A673 (cell line): ENCODE measurements at regions of chr5 and their contacts with region 1.

Region 1: GRCh38 chr5:149561848-149562247 is 10.6 kb upstream of the CSNK1A1 start:
- DNase-seq: peak; percentile 94
- H3K4me3 ChIP-seq: peak overlapping the region; percentile 21
- H3K27ac ChIP-seq: peak overlapping the region; percentile 73
- H3K4me1 ChIP-seq: peaks cover 31% of the 10 kb centered on the region
- H3K27me3 ChIP-seq: no peaks in the 10 kb centered on the region
- CTCF ChIP-seq: no peak

Region 2: DNA sequence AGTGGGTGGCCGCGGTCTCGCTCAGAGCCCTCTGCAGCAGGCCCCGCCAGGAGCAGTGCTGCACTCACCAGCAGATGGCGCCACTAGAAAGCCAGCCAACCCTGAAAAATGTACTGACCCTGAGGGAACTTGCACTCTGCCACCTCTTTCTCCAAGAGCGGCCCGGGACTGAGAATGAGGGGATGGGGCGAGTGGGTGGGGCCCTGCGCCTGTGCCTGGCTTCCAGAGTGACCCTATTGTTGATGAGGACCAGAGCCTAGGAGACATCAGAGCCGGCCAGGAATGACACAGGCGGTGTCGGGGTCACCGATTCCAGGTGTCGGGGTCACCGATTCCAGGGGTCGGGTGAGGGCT is 179.9 kb before region 1 on chr5:
- CTCF ChIA-PET with region 1: interaction called, 4 read pairs
- POLR2A ChIA-PET with region 1: no interaction called
- intact Hi-C with region 1: loop called (anchors 1 kb)
- DNase-seq: peak; percentile 62
- H3K4me3 ChIP-seq: no peak overlapping the region
- H3K27ac ChIP-seq: no peak overlapping the region
- H3K4me1 ChIP-seq: no peaks in the 10 kb centered on the region
- H3K27me3 ChIP-seq: no peaks in the 10 kb centered on the region
- CTCF ChIP-seq: peak; percentile 95

Region 3: DNA sequence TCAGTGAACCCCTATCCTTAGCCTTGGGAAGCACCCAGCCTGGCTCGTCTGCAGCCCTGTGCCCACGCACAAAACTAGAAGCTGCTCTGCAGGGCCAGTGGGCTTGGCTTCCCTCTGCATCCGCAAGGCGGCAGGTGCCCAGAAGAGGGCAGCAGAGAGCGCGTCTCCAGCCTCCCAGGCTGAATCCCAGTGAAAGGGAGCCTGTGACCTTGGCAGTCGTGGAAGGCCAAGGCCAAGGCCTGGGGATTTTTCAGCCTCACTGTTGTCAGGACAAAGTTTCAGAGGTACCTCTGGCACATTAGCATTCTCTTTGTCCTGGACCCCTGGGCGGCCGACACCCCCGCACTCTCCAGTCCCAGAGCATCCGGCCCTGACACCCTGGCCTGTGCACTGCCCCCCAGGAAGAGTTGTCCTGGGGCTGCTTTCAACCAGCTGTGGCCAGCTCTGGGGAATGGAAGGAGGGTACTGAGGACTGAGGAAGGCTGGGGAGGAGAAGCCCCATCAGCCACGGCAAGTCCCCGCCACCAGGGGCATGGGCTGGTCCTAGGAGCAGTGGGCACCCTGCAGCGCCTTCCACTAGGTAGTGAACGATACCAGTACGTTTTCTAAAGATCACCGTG is 119.2 kb before region 1 on chr5:
- CTCF ChIA-PET with region 1: no interaction called
- POLR2A ChIA-PET with region 1: no interaction called
- intact Hi-C with region 1: loop called (anchors 2 kb)
- DNase-seq: peak; percentile 76
- H3K4me3 ChIP-seq: no peak overlapping the region
- H3K27ac ChIP-seq: no peak overlapping the region
- H3K4me1 ChIP-seq: no peaks in the 10 kb centered on the region
- H3K27me3 ChIP-seq: no peaks in the 10 kb centered on the region
- CTCF ChIP-seq: peak; percentile 93

Region 4: GRCh38 chr5:149551200-149552037 is 10.4 kb before region 1 on chr5 and contains the start of gene CSNK1A1:
- CTCF ChIA-PET with region 1: interaction called, 11 read pairs
- POLR2A ChIA-PET with region 1: interaction called, 3 read pairs
- intact Hi-C with region 1: no loop called
- DNase-seq: peak; percentile 99
- H3K4me3 ChIP-seq: peak within 1 kb of the TSS; percentile 91
- H3K27ac ChIP-seq: peak within 1 kb of the TSS; percentile 95
- H3K4me1 ChIP-seq: peaks cover 30% of the 10 kb centered on the region
- H3K27me3 ChIP-seq: no peaks in the 10 kb centered on the region
- CTCF ChIP-seq: peak; percentile 57
- total RNA-seq, gene CSNK1A1: 237 and 244 TPM in 2 replicates

Region 5: GRCh38 chr5:149697001-149697400 is 135.2 kb after region 1 on chr5:
- CTCF ChIA-PET with region 1: no interaction called
- POLR2A ChIA-PET with region 1: no interaction called
- intact Hi-C with region 1: no loop called
- DNase-seq: no peak
- H3K4me3 ChIP-seq: no peak overlapping the region
- H3K27ac ChIP-seq: no peak overlapping the region
- H3K4me1 ChIP-seq: no peaks in the 10 kb centered on the region
- H3K27me3 ChIP-seq: peaks cover 20% of the 10 kb centered on the region
- CTCF ChIP-seq: no peak